ENCODE measurements at regions of chr5 and their contacts with region 1.

Region 1: DNA sequence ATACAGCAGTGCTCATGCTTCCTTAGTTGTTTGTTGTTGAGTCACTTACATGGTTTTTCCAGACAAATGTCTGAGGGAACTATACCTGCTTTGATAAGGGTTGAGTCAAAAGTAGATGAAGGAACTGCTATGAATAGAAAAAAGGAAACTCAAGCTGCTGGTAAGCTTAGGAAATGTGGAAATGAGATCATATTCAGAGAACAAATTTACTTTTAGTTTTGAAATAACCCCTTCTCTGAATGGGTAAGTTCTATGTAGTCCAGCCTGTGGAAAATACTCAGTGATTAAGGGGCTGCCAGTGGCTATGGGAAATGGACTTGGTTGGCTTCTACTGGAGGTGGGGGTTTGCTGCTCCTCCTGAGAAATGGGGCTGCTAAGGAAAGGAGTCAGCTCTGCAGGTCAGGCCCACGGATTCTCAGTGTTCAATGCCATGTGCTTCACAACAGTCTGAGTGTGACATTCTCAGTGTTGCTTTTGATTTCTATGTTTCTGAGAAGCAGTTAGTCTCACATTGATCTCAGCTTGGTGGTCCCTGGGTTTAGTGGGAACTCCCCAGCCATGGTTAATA is 47.7 kb upstream of the GLRX start:
- DNase-seq: peak; percentile 45
- CTCF ChIP-seq: no peak

Region 2: DNA sequence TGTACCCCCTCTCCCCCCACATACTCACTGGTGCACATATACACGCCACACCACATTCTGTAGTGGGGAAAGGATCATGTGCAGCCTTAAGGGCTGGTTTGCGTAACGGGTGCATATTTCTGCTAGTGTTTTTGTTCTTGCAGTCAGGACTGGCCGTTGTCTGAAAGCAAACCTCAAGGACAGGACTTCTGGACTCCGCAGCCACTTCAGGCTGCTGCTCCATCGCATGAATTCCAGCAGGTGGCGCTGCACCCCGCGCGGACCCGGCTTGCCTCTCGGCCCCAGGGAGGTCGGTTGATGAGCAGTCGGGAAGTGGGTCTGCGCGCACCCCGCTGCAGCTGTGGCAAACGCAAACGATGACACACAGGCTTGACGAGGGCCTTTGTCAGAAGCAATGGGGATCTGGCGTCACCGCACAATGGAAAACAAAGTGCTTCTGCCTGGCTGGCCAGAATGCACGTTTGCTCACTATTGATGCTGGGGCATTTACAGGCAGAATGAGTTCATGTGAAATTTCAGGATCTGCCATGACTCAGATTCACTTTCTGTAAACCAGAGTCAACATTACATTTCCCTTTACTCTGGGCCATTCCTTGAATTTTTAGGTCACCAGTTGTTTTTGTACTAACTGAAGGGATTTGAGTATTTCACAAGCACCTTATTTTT is 11.4 kb before region 1 on chr5:
- CTCF ChIA-PET with region 1: interaction called, 80 read pairs
- POLR2A ChIA-PET with region 1: no interaction called
- DNase-seq: peak; percentile 89
- CTCF ChIP-seq: peak; percentile 98

Measured in GM10248 (cell line).